Naive thymus-derived CD4-positive, alpha-beta T cell (primary cell): ENCODE measurements at regions of chr4 and their contacts with region 1.

Region 1: DNA sequence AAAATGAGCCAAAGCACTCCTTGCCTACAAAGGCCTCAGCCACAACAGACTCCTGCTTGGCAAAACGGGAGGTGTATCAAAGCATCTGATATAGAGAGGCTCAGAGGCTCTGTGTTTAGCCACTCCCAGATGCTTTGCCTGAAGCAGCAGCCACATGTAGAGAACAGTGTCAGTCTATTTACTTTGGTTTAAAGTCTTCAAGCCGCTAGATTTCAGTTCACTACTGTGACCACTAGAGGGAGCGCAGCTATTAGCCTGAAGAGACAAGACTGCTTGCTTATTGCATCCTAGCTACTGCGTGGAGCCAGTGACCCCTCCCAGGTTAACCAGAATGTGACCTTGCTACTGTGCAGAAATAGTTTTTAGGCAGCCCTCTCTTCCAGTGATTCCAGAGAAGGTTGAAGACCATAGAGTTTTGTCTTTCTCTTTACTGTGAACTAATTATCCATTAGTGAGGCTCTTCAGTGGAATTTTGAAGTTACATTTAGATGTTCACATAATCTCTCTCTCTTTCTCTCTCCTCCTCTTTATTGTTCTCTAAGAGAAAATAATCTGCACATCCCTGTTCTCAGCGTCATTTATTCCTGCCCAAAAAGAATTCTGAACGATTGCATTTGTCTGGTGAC is 39.3 kb downstream of the BMP3 start:
- DNase-seq: peak in 8 of 9 donors; percentile 38 to 67 (median 56)
- ATAC-seq: peak; percentile 95
- H3K4me3 ChIP-seq: no peak overlapping the region
- H3K4me3 Mint-ChIP-seq: no peak overlapping the region
- H3K27ac ChIP-seq: no peak overlapping the region
- H3K27ac Mint-ChIP-seq: no peak overlapping the region
- H3K4me1 ChIP-seq: no peaks in the 10 kb centered on the region
- H3K4me1 Mint-ChIP-seq: peaks cover 0 to 5% (median 0%) of the 10 kb centered on the region in 7 donors
- H3K27me3 ChIP-seq: no peaks in the 10 kb centered on the region
- H3K27me3 Mint-ChIP-seq: peaks cover 6 to 24% (median 7%) of the 10 kb centered on the region in 5 donors

Region 2: DNA sequence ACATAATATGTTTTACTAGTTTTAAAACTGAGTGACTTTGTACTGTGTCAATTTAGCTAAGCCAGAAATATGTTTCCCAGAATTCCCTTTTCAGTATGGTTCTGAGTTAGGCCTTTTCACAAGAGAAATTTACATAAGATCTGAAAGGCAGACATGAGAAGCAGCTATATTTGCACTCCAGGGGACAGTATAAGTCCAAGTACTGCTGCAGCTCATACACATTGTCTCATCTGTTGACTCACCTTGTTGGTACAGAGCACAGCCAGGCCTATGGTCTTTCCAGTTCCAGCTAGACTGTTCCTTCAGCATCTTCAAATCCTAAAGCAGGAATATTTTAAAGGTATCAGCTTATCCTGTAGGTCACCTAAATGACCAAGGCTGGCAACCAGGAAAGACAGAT is 14.2 kb after region 1 on chr4:
- CTCF ChIA-PET with region 1: interaction called, 10 read pairs
- POLR2A ChIA-PET with region 1: no interaction called
- intact Hi-C with region 1: no loop called
- DNase-seq: no peak
- ATAC-seq: no peak
- H3K4me3 ChIP-seq: no peak overlapping the region
- H3K4me3 Mint-ChIP-seq: no peak overlapping the region
- H3K27ac ChIP-seq: no peak overlapping the region
- H3K27ac Mint-ChIP-seq: no peak overlapping the region
- H3K4me1 ChIP-seq: no peaks in the 10 kb centered on the region
- H3K4me1 Mint-ChIP-seq: no peaks in the 10 kb centered on the region
- H3K27me3 ChIP-seq: no peaks in the 10 kb centered on the region
- H3K27me3 Mint-ChIP-seq: peaks cover 0 to 11% (median 5%) of the 10 kb centered on the region in 5 donors

Region 3: DNA sequence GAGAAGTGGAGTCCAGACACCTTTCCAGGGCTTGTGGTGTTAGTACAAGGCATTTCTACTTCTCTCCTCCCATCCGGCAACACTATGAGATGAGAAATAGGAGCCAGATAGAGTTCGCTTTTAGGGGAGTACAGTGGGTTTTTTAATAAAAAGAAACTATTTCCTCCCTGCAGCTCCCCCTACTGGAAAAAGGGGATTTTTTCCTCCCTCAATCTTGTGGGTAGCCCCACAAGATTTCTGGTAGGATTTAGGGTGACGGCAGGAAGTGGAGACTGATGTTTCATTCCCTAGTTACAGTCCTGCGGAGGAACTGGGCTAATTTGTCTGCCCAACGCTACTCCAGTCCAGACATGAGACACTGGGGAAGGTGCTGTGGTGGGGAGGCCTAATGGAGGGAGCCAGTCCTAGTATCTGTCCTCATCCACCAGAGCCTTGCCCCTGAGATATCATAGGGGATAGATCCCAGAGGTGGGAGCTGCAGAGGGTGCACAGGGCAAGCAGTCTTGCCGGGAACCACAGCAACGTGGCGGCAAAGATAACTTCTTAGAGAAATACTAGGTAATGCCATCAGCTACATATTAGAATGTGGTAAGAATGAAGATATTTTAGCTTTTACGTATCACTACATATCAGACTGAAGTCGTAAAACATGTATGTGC is 190.8 kb after region 1 on chr4:
- CTCF ChIA-PET with region 1: no interaction called
- POLR2A ChIA-PET with region 1: no interaction called
- intact Hi-C with region 1: loop called in 1 of 2 experiments (anchors 1 kb)
- DNase-seq: no peak
- ATAC-seq: no peak
- H3K4me3 ChIP-seq: no peak overlapping the region
- H3K4me3 Mint-ChIP-seq: no peak overlapping the region
- H3K27ac ChIP-seq: no peak overlapping the region
- H3K27ac Mint-ChIP-seq: no peak overlapping the region
- H3K4me1 ChIP-seq: no peaks in the 10 kb centered on the region
- H3K4me1 Mint-ChIP-seq: no peaks in the 10 kb centered on the region
- H3K27me3 ChIP-seq: no peaks in the 10 kb centered on the region
- H3K27me3 Mint-ChIP-seq: peaks cover 0 to 16% (median 9%) of the 10 kb centered on the region in 5 donors

Region 4: GRCh38 chr4:81351654-81352445 is 282.0 kb after region 1 on chr4:
- CTCF ChIA-PET with region 1: interaction called, 7 read pairs
- POLR2A ChIA-PET with region 1: no interaction called
- intact Hi-C with region 1: loop called (anchors 1 kb)
- DNase-seq: peak; percentile 21 to 59 (median 49)
- ATAC-seq: peak; percentile 73
- H3K4me3 ChIP-seq: no peak overlapping the region
- H3K4me3 Mint-ChIP-seq: no peak overlapping the region
- H3K27ac ChIP-seq: no peak overlapping the region
- H3K27ac Mint-ChIP-seq: no peak overlapping the region
- H3K4me1 ChIP-seq: no peaks in the 10 kb centered on the region
- H3K4me1 Mint-ChIP-seq: peaks cover 0 to 2% (median 0%) of the 10 kb centered on the region in 7 donors
- H3K27me3 ChIP-seq: no peaks in the 10 kb centered on the region
- H3K27me3 Mint-ChIP-seq: peaks cover 0 to 24% (median 11%) of the 10 kb centered on the region in 5 donors